Common myeloid progenitor, CD34-positive (primary cell): ENCODE measurements at regions of chr22 and their contacts with region 1.

Region 1: GRCh38 chr22:26461188-26461810 is 22.3 kb downstream of the HPS4 start:
- DNase-seq: peak in 2 of 3 donors; percentile 23 to 30
- H3K4me3 ChIP-seq: no peak overlapping the region
- H3K27ac ChIP-seq: no peak overlapping the region
- H3K4me1 ChIP-seq: no peaks in the 10 kb centered on the region
- H3K27me3 ChIP-seq: no peaks in the 10 kb centered on the region

Region 2: DNA sequence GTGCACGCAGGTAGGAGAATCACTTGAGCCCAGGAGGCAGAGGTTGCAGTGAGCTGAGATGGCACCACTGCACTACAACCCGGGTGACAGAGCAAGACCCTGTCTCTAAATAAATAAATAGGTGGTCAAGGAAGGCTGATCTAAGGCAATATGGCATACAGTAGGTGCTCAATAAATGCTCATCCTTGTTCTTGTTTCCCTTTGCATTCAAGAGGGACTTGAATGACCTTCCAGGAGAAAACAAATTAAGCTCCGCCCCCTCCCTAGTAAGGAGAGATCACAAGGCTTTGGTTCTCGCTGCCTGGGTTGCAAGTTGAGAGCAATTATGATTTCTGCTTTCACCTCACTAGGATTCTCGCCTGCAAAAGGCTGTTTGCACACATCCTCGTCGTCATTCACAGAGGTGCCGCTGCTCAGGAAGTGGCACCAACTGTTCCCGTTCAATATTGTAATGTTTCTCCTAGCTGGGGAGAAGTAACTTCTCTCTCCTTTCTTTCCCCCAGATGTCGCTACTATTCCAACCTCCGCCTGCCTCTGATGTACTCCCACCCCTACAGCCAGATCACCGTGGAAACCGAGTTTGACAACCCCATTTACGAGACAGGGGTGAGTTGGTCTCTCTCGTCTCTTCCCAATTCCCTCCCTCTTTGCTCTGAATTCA is 84.0 kb before region 1 on chr22:
- CTCF ChIA-PET with region 1: interaction called, 27 read pairs
- POLR2A ChIA-PET with region 1: no interaction called
- DNase-seq: peak; percentile 58 to 77 (median 70)
- H3K4me3 ChIP-seq: peak overlapping the region in 4 of 7 experiments; percentile 0 to 57 (median 22)
- H3K27ac ChIP-seq: no peak overlapping the region
- H3K4me1 ChIP-seq: peaks cover 0 to 11% (median 6%) of the 10 kb centered on the region in 4 experiments
- H3K27me3 ChIP-seq: peaks cover 0 to 2% (median 0%) of the 10 kb centered on the region in 5 experiments

Region 3: DNA sequence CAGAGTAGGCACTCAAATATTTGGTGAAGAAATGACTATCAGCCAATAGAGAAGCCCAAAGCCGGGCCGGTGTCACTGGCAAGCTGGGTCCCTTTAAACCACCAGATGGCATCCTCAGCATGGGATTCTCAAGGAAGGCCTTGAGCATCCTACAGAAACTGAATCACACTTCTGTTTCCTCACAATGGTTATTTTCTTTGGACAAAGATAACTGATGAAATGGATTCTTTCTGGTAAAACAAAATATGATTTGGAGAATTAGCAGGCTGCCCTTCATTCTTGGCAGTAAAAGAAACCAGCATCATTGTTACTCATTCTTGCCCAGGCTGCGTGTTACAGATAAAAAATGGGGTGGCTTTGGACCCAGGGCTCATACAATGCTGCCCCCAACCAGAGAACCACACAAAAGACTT is 62.6 kb before region 1 on chr22:
- CTCF ChIA-PET with region 1: interaction called, 94 read pairs
- POLR2A ChIA-PET with region 1: no interaction called
- DNase-seq: peak; percentile 56 to 84 (median 83)
- H3K4me3 ChIP-seq: no peak overlapping the region
- H3K27ac ChIP-seq: no peak overlapping the region
- H3K4me1 ChIP-seq: no peaks in the 10 kb centered on the region
- H3K27me3 ChIP-seq: no peaks in the 10 kb centered on the region

Region 4: DNA sequence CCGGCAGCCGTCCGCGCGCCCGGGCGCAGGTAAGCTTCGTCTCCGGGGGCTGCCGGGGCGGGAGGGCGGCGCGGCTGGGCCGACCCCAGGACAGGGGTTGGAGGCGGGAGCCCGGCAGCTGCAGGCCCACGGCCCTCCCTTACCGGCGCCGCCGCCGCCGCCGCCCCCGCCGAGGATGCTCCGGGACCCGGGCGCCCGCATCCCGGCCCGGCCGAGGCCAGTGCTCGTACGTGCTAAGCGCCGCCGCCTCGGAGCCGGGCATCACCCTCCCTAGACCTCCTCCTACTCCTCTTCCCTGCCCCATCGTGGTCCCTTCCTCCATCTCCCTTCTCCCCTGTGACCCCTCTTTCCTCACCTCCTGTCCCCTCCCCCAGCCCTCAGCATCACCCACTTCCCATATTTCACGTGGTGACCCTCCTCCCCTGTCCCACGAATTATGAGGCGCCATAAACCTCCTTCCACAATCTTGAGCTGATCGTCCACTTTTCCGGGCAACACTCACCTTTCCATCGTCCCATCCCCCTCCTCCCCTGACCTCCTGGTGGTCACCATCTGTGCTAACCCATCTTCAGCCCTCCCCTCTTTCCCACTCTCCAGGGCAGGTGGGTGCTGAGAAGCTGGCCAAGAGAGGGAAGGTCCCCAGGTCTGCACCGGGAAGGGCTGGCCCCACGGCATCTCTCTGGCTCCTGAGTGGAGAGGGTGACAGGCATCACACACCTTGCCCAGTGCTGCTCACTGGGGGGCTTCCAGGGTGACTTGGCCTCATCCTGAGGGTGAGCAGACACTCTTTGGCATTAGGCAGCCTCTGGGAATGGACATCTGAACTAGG is 31.6 kb before region 1 on chr22:
- CTCF ChIA-PET with region 1: interaction called, 13 read pairs
- POLR2A ChIA-PET with region 1: no interaction called
- DNase-seq: no peak
- H3K4me3 ChIP-seq: peak overlapping the region; percentile 2 to 91 (median 61)
- H3K27ac ChIP-seq: no peak overlapping the region
- H3K4me1 ChIP-seq: peaks cover 6 to 37% (median 24%) of the 10 kb centered on the region in 4 experiments
- H3K27me3 ChIP-seq: peaks cover 0 to 10% (median 2%) of the 10 kb centered on the region in 5 experiments

Region 5: GRCh38 chr22:26447584-26448329 is 13.5 kb before region 1 on chr22:
- CTCF ChIA-PET with region 1: interaction called, 14 read pairs
- POLR2A ChIA-PET with region 1: no interaction called
- DNase-seq: no peak
- H3K4me3 ChIP-seq: no peak overlapping the region
- H3K27ac ChIP-seq: no peak overlapping the region
- H3K4me1 ChIP-seq: no peaks in the 10 kb centered on the region
- H3K27me3 ChIP-seq: no peaks in the 10 kb centered on the region